Activated naive CD4-positive, alpha-beta T cell treated with anti-CD3 and anti-CD28 coated beads, Interleukin-2, amount 10 ng/mL, durations not matched to agents 7 days and 5 days (primary cell): ENCODE measurements at regions of chr14 and their contacts with region 1.

Region 1: DNA sequence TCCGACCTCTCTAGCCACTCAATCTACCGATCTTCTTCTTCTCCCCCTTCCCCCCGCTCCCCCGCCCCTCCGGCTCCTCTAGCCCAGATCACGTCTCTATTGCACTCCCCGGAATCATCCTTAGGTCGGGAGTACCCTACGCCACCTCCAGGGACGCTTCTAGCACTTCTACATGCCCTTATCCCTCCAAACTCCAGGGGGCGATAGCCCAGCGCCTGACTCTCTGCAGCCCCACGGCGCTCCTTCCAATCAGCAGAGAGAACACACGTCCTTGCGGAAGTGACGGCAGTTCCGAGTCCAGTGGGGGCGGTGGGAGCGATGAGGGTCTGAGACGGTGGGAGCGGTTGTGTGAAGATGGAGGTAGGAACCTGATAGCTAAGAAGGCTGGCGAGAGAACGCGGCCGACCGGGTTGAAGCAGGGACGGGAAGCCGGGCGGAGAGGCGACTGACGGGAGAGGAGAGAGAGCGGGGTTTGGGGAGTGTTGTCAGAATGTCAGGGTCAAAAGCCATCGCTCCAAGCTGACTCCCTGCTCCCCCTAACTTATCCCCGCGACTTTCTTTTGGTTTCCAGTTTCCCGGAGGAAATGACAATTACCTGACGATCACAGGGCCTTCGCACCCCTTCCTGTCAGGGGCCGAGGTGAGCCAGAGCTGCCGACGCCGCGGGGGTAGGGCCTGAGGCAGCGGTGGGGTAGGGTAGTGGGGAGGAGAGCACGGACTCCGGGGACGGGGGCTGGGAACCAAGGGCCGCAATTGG is at the starts of genes RAB2B and TOX4:
- DNase-seq: peak; percentile 97
- H3K4me3 Mint-ChIP-seq: peak within 1 kb of the TSS; percentile 99
- H3K27ac Mint-ChIP-seq: peak within 1 kb of the TSS; percentile 98
- H3K4me1 Mint-ChIP-seq: peaks cover 40% of the 10 kb centered on the region
- H3K27me3 Mint-ChIP-seq: no peaks in the 10 kb centered on the region

Region 2: GRCh38 chr14:21455911-21456667 is 21.0 kb before region 1 on chr14 and contains the start of gene CHD8:
- CTCF ChIA-PET with region 1: interaction called, 17 read pairs
- DNase-seq: peak; percentile 100
- H3K4me3 Mint-ChIP-seq: peak within 1 kb of the TSS; percentile 93
- H3K27ac Mint-ChIP-seq: peak within 1 kb of the TSS; percentile 99
- H3K4me1 Mint-ChIP-seq: peaks cover 37% of the 10 kb centered on the region
- H3K27me3 Mint-ChIP-seq: no peaks in the 10 kb centered on the region